Left cardiac atrium (tissue), 4 donors: ENCODE measurements at regions of chr11 and their contacts with region 1.

Region 1: DNA sequence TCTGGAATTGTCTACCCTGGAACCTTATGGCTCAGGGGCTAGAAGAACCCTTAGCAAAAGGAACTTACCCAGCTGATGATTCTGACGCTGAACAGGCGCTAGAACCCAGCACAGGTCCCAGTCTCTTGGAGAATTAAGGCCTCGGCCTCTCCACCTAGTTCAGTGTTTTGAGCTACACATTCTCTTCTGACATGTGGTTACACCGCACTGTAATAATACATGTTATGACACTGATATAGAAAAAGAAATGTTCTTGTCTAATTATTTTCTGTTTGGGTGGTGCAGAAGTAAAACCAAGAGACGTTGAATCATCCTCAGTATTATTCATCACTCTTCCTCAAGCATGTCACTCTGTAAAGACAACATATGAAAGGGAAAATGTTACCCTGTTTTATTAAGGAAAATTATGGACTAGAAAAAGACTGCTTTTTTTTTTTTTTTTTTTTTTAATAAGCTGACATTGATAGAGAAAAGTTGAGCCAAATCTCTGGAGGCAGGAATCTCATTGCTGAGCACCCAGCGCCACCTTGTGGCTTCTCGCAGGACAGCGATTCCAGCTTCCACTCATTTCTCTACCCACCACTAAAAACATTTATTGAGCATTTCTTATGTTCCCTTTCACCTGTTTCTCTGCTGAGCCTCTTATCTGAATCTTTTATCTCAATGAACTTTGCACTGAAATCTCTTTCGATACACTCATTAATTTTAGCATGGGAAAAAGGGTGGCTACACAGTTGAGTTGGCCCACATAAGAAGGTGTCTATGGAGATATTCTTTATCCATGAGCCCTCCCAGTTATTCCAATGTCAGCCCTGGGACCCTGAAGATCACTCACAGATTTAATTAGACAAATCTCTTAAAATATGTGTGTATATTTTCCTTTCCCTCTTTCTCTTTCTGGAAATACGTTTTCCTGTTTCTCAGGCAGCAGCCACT is 12.6 kb upstream of the APLNR start:
- DNase-seq: peak; percentile 70
- ATAC-seq: peak; percentile 58 to 69

Region 2: GRCh38 chr11:56841210-56841810 is 408.3 kb before region 1 on chr11:
- intact Hi-C with region 1: loop called (anchors 2 to 5 kb)
- DNase-seq: peak; percentile 28
- ATAC-seq: peak; percentile 63 to 65

Region 3: DNA sequence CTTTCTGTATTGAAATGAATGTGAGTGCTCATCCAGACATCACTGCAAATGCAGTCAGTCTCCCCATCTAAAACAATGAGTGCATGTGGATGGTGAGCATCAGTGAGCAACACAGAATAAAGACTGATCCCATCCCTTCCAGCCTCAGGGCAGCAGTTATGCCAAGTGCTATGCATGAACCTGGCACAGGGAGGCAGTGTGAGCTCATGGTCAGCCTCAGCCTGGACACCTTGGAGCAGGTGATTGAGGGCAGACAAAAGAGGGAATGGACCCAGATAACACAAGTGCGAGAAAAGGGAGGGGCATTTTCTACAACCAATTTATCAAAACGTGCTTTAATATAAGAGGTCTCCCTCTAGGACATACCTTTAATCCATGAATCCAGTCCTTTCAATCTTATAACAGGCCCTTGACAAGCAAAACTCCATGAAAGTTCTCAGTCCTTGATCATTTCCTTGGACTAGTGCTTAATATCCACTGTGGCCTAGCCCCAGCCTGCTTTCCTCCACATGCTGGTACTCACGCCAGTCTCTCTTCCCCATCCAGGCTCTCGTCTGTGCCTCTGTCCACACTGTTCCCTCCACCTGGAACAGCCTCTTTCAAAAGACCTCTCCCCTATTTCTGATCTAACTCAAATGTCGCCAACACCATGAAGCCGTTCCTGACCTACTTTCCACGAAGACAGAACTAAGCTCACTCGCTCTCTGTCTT is 118.4 kb before region 1 on chr11:
- intact Hi-C with region 1: loop called (anchors 1 kb)
- DNase-seq: peak; percentile 33
- ATAC-seq: peak; percentile 88 to 89

Region 4: DNA sequence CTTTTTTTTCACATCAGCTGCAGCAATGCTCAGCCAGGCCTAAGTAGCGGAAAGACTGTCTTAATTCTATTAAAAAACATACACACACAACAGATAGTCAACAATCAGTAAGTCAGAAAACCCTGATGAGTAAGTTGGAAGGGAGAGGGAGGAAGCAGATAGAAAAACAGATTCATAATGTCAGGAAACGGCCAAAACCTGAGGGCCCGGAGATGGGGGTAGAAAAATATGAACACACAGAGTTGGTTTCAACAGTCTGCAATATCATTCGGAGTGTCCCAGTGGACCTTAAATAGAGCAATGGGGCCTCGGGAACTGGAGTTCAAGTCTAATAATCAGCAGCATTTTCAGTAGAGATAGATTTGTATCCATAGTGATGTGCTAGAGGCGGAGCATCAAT is 53.1 kb before region 1 on chr11:
- intact Hi-C with region 1: loop called in 1 of 2 experiments (anchors 10 kb)
- DNase-seq: no peak
- ATAC-seq: no peak

Region 5: GRCh38 chr11:57410287-57410686 is 160.6 kb after region 1 on chr11:
- intact Hi-C with region 1: no loop called
- DNase-seq: no peak
- ATAC-seq: no peak